Activated CD4-positive, alpha-beta memory T cell treated with anti-CD3 and anti-CD28 coated beads for 36 hours (primary cell): ENCODE measurements at regions of chr5 and their contacts with region 1.

Region 1: GRCh38 chr5:157670662-157671591 is at the start of gene C5orf52:
- DNase-seq: peak; percentile 39
- H3K4me3 Mint-ChIP-seq: peak within 1 kb of the TSS; percentile 77
- H3K27ac Mint-ChIP-seq: peak within 1 kb of the TSS; percentile 47
- H3K4me1 Mint-ChIP-seq: peaks cover 20% of the 10 kb centered on the region
- H3K27me3 Mint-ChIP-seq: peaks cover 5% of the 10 kb centered on the region
- total RNA-seq, gene C5orf52: not detected

Region 2: GRCh38 chr5:157554179-157555036 is 116.5 kb before region 1 on chr5:
- CTCF ChIA-PET with region 1: no interaction called
- POLR2A ChIA-PET with region 1: no interaction called
- intact Hi-C with region 1: loop called (anchors 5 kb)
- DNase-seq: no peak
- H3K4me3 Mint-ChIP-seq: no peak overlapping the region
- H3K27ac Mint-ChIP-seq: peak overlapping the region; percentile 53
- H3K4me1 Mint-ChIP-seq: peaks cover 86% of the 10 kb centered on the region
- H3K27me3 Mint-ChIP-seq: no peaks in the 10 kb centered on the region

Region 3: GRCh38 chr5:157681048-157681447 is 10.1 kb after region 1 on chr5:
- CTCF ChIA-PET with region 1: no interaction called
- POLR2A ChIA-PET with region 1: no interaction called
- intact Hi-C with region 1: no loop called
- DNase-seq: no peak
- H3K4me3 Mint-ChIP-seq: no peak overlapping the region
- H3K27ac Mint-ChIP-seq: no peak overlapping the region
- H3K4me1 Mint-ChIP-seq: no peaks in the 10 kb centered on the region
- H3K27me3 Mint-ChIP-seq: no peaks in the 10 kb centered on the region

Region 4: GRCh38 chr5:157710872-157711271 is 39.9 kb after region 1 on chr5:
- CTCF ChIA-PET with region 1: no interaction called
- POLR2A ChIA-PET with region 1: no interaction called
- intact Hi-C with region 1: loop called (anchors 2 kb)
- DNase-seq: no peak
- H3K4me3 Mint-ChIP-seq: no peak overlapping the region
- H3K27ac Mint-ChIP-seq: no peak overlapping the region
- H3K4me1 Mint-ChIP-seq: peaks cover 16% of the 10 kb centered on the region
- H3K27me3 Mint-ChIP-seq: peaks cover 1% of the 10 kb centered on the region

Region 5: DNA sequence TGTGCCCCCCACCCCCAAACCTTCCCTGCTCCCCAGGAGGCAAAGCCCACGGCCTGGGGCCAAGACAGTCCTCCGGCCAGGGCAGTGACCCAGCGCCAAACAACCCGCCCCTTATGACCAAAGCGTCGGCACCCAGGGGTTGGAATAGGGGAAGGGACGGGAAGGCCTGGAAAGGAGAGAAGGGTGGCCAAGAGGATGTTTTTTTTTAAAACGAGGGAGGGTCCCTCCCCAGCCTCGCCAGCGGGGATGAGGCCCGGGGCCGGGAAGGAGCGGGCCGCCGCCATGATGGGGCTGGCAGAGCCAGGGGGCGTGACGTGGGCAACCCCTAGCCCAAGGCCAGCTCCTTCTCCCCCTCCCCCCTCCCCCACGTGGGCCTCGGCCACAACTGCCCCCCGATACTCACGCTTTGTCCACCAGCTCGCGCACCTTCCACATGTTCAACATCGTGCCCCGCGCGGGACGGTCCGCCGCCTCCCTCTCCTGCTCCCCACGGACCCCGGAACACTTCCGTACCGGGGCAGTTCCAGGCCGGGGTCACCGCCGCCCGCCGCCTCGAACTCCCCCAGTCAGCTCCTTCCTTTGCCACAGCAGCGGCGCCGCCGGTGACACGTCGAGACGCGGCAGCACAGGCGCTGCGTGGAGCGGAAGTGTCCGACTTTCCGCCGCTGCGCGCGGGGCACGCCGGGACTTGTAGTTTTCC is 187.8 kb after region 1 on chr5 and contains the start of gene CLINT1:
- CTCF ChIA-PET with region 1: no interaction called
- POLR2A ChIA-PET with region 1: no interaction called
- intact Hi-C with region 1: no loop called
- DNase-seq: peak; percentile 92
- H3K4me3 Mint-ChIP-seq: peak within 1 kb of the TSS; percentile 91
- H3K27ac Mint-ChIP-seq: peak within 1 kb of the TSS; percentile 96
- H3K4me1 Mint-ChIP-seq: peaks cover 73% of the 10 kb centered on the region
- H3K27me3 Mint-ChIP-seq: no peaks in the 10 kb centered on the region
- total RNA-seq, gene CLINT1: 48.7 to 49.4 TPM